ENCODE measurements at regions of chr3 and their contacts with region 1.

Region 1: GRCh38 chr3:142447852-142448823 is at the start of gene XRN1:
- DNase-seq: peak; percentile 89 to 97 (median 94)
- ATAC-seq: peak; percentile 94
- H3K4me3 ChIP-seq: peak within 1 kb of the TSS; percentile 85
- H3K4me3 Mint-ChIP-seq: peak within 1 kb of the TSS; percentile 95
- H3K27ac ChIP-seq: peak within 1 kb of the TSS; percentile 97 to 98
- H3K27ac Mint-ChIP-seq: peak within 1 kb of the TSS; percentile 99
- H3K4me1 ChIP-seq: peaks cover 16% of the 10 kb centered on the region
- H3K4me1 Mint-ChIP-seq: peaks cover 58% of the 10 kb centered on the region
- H3K27me3 ChIP-seq: no peaks in the 10 kb centered on the region
- H3K27me3 Mint-ChIP-seq: no peaks in the 10 kb centered on the region
- CTCF ChIP-seq: no peak
- total RNA-seq, gene XRN1: 85.7 to 97.6 TPM

Region 2: DNA sequence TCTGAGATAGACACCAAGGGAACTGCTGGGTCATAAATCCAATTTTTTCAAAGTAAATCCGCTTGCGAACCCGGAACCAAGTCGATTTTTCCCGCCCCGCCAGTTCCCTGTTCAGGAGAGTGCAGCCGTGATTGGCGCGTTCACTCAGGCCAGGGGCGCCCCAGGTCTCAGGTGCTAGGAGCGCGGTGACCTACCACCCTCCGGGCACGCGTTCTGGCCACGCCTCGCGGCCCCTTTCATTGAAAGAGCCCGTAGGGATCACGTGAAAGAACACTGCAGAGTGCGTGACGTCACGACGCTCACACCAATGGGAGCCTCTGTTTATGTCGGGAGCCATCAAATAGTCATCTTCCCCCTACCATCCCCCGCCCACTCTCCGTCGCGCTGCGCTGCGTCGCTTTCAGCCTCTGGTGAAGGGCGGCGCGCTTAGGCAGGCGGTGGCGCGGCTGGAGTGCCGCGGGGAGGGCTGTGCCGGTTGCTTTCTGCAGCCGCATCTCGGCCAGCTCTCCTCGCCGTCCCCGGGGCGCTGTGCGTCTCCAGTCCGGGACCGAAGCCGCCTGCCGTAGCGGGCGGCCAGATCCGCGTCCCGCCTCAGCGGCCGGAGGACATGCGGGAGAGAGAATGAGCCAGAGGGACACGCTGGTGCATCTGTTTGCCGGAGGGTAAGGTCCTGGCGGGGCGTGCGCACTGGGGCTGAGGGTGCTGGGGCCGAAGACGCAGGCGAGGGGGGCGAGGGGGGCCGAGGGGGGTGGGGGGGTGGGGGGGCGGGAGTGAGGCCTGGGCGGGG is 1506.5 kb before region 1 on chr3 and contains the start of gene SLC25A36:
- CTCF ChIA-PET with region 1: no interaction called
- POLR2A ChIA-PET with region 1: no interaction called
- intact Hi-C with region 1: loop called in 1 of 2 experiments (anchors 5 kb)
- DNase-seq: peak; percentile 87 to 99 (median 94)
- ATAC-seq: peak; percentile 96
- H3K4me3 ChIP-seq: peak within 1 kb of the TSS; percentile 71
- H3K4me3 Mint-ChIP-seq: peak within 1 kb of the TSS; percentile 94
- H3K27ac ChIP-seq: peak within 1 kb of the TSS; percentile 71 to 78
- H3K27ac Mint-ChIP-seq: peak within 1 kb of the TSS; percentile 100
- H3K4me1 ChIP-seq: peaks cover 9% of the 10 kb centered on the region
- H3K4me1 Mint-ChIP-seq: peaks cover 42% of the 10 kb centered on the region
- H3K27me3 ChIP-seq: no peaks in the 10 kb centered on the region
- H3K27me3 Mint-ChIP-seq: no peaks in the 10 kb centered on the region
- CTCF ChIP-seq: no peak
- total RNA-seq, gene SLC25A36: 166 to 171 TPM

Region 3: DNA sequence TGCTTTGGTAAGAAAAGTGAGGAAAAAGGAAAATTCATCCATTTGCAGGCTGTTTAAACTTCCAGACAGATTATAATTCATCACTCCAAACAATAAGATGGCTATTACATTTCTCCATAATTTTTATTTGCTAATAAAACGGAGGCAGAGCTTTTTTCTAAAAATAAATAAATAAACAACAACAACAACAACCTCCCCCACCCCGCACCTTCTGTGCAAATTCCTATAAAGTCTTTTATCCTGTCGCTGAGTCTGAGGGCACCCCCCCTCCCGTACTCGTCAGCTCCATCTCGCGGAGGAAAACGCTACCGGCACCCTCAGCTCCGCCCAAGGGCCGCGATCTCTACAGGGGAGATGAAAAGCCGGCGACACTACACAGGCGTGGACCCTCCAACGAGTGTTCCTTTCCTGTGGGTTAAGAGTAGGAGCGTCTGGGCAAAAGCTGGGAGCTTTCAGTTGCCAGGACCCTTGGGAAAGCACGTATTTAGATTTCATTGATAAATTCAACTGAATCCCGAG is 572.7 kb before region 1 on chr3:
- CTCF ChIA-PET with region 1: no interaction called
- POLR2A ChIA-PET with region 1: no interaction called
- intact Hi-C with region 1: loop called in 1 of 2 experiments (anchors 5 kb)
- DNase-seq: peak; percentile 71 to 91 (median 78)
- ATAC-seq: peak; percentile 65
- H3K4me3 ChIP-seq: peak overlapping the region; percentile 83
- H3K4me3 Mint-ChIP-seq: peak overlapping the region; percentile 92
- H3K27ac ChIP-seq: peak overlapping the region; percentile 90 to 98
- H3K27ac Mint-ChIP-seq: peak overlapping the region; percentile 93
- H3K4me1 ChIP-seq: peaks cover 11% of the 10 kb centered on the region
- H3K4me1 Mint-ChIP-seq: peaks cover 29% of the 10 kb centered on the region
- H3K27me3 ChIP-seq: no peaks in the 10 kb centered on the region
- H3K27me3 Mint-ChIP-seq: no peaks in the 10 kb centered on the region
- CTCF ChIP-seq: peak; percentile 90

Region 4: DNA sequence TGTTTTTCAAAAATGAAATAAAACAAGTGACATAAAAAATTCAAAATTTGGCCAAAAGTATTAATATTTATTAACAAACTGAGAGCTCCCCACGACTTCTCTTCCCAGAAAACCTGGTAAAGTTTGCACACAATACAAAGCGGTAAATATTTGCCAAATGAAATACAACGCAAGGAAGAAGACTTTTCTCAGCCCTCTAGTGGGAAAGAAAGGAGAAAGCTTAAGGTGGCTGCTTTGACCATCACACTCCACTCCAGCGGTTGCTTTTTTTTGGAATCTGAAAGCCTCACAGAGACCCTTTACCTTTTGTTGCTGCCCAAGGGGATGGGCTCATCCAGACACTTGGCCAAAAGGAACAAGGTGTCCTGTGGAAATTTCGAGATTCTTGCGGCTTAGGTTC is 221.7 kb before region 1 on chr3:
- CTCF ChIA-PET with region 1: no interaction called
- POLR2A ChIA-PET with region 1: no interaction called
- intact Hi-C with region 1: loop called in 1 of 2 experiments (anchors 5 kb)
- DNase-seq: peak in 1 of 14 experiments; percentile 10
- ATAC-seq: no peak
- H3K4me3 ChIP-seq: no peak overlapping the region
- H3K4me3 Mint-ChIP-seq: peak overlapping the region; percentile 95
- H3K27ac ChIP-seq: no peak overlapping the region
- H3K27ac Mint-ChIP-seq: no peak overlapping the region
- H3K4me1 ChIP-seq: peaks cover 10% of the 10 kb centered on the region
- H3K4me1 Mint-ChIP-seq: peaks cover 22% of the 10 kb centered on the region
- H3K27me3 ChIP-seq: no peaks in the 10 kb centered on the region
- H3K27me3 Mint-ChIP-seq: no peaks in the 10 kb centered on the region
- CTCF ChIP-seq: no peak

Region 5: GRCh38 chr3:142429582-142429981 is 18.6 kb before region 1 on chr3:
- CTCF ChIA-PET with region 1: no interaction called
- POLR2A ChIA-PET with region 1: no interaction called
- intact Hi-C with region 1: loop called in 1 of 2 experiments (anchors 2 kb)
- DNase-seq: no peak
- ATAC-seq: no peak
- H3K4me3 ChIP-seq: no peak overlapping the region
- H3K4me3 Mint-ChIP-seq: no peak overlapping the region
- H3K27ac ChIP-seq: no peak overlapping the region
- H3K27ac Mint-ChIP-seq: no peak overlapping the region
- H3K4me1 ChIP-seq: no peaks in the 10 kb centered on the region
- H3K4me1 Mint-ChIP-seq: peaks cover 22% of the 10 kb centered on the region
- H3K27me3 ChIP-seq: no peaks in the 10 kb centered on the region
- H3K27me3 Mint-ChIP-seq: no peaks in the 10 kb centered on the region
- CTCF ChIP-seq: no peak

Region 6: DNA sequence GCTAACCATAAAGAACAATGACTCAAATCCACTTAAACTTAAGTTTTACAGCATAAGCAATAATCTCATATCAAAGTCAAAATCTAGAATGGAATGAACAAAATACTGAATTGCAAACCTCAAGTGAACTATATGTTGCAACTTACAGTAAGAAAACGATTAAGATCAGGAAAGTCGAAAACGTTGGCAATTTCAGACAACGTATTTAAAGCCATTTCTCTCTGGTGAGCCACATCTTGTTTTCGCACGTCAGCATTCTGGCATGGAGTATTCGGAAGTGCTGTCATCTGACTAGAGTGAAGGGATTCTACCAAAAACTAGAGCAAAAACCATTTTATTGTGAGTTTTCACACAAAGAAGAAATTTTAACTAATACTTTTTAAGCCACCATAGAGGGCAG is 101.8 kb after region 1 on chr3:
- CTCF ChIA-PET with region 1: no interaction called
- POLR2A ChIA-PET with region 1: no interaction called
- intact Hi-C with region 1: no loop called
- DNase-seq: no peak
- ATAC-seq: no peak
- H3K4me3 ChIP-seq: no peak overlapping the region
- H3K4me3 Mint-ChIP-seq: no peak overlapping the region
- H3K27ac ChIP-seq: no peak overlapping the region
- H3K27ac Mint-ChIP-seq: no peak overlapping the region
- H3K4me1 ChIP-seq: no peaks in the 10 kb centered on the region
- H3K4me1 Mint-ChIP-seq: no peaks in the 10 kb centered on the region
- H3K27me3 ChIP-seq: no peaks in the 10 kb centered on the region
- H3K27me3 Mint-ChIP-seq: no peaks in the 10 kb centered on the region
- CTCF ChIP-seq: no peak

Region 7: DNA sequence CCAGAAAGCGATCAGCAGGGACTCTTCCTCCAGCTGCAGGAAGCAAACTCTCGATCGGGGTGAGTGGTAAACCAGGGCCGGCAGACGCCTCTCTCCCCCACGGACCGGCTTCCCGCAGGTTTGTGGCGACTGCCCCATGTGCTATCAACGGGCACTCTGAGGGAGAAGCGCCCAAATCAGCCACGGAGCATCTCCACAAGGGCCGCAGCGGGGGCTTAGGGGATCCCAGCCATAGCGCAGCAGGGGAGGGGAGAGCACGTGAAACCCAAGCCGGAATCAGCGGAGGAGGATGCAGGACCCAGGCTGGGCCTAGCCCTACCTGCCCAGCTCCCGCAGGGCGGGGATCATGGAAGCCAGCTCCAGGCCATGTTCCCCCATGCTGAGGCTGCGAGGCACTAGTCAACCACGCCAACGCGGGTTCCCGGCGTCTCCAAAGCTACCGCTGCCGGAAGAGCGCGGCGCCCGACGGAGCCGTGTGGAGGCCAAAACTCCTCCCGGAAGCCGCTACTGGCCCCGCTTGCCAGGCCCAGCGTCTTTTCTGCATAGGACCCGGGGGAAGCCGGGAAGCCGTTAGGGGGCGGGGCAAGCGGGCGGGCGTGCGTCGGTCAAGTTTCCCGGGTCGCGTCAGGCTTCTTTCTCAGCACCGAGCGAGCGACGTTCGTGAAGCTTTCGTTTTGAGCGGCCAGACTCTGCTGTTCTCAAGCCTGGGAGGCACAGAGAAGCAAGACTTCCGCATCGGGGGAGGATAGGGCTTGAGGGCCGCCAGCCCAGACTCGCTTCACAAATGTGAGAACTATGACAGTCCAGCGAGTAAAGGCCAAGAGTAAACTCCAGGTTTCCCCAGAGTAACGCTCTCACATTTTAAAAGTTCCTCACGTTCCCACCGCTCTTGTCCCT is 130.4 kb after region 1 on chr3 and contains the start of gene ATR:
- CTCF ChIA-PET with region 1: no interaction called
- POLR2A ChIA-PET with region 1: interaction called, 9 read pairs
- intact Hi-C with region 1: loop called (anchors 2 to 5 kb)
- DNase-seq: peak; percentile 91 to 98 (median 96)
- ATAC-seq: peak; percentile 93
- H3K4me3 ChIP-seq: peak within 1 kb of the TSS; percentile 95
- H3K4me3 Mint-ChIP-seq: peak within 1 kb of the TSS; percentile 99
- H3K27ac ChIP-seq: peak within 1 kb of the TSS; percentile 90 to 93
- H3K27ac Mint-ChIP-seq: peak within 1 kb of the TSS; percentile 97
- H3K4me1 ChIP-seq: peaks cover 15% of the 10 kb centered on the region
- H3K4me1 Mint-ChIP-seq: peaks cover 64% of the 10 kb centered on the region
- H3K27me3 ChIP-seq: no peaks in the 10 kb centered on the region
- H3K27me3 Mint-ChIP-seq: peaks cover 6% of the 10 kb centered on the region
- CTCF ChIP-seq: no peak
- total RNA-seq, gene ATR: 29.0 to 29.5 TPM

Region 8: DNA sequence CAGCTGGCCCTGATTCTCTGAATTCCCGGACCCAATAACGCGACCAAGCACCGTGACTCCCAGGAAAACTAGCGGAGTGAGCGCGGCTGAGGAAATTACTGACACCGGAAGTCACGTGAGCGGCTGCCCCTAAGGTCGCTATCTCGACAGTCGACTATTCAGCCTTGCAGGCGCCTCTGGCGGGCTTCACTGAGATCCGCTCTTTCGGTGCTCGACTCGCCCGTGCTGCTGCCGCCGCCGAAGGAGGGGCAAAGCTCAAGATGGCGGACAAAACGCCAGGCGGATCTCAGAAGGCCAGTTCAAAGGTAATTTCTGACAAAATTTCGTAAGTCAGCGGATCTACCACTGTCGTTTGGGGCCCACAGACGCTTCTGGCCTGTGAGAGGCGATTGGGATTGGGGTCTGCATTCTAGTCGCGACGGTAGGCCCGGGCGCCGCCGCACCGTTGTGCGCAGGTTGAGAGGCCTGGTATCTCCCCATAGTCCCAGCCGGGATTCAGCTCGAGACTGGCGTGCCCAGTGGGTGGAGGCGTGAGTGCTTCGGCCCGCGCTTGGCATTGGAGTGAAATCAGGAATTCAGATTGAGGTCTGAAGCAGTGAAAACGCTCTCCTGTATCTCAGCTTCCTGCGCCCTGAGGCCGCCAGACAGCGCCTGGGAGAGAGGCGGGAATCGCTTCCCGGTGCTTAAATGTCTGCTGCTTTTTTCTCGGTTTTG is 553.4 kb after region 1 on chr3 and contains the start of gene U2SURP:
- CTCF ChIA-PET with region 1: no interaction called
- POLR2A ChIA-PET with region 1: interaction called, 35 read pairs
- intact Hi-C with region 1: loop called (anchors 1 kb)
- DNase-seq: peak; percentile 83 to 96 (median 86)
- ATAC-seq: peak; percentile 93
- H3K4me3 ChIP-seq: peak within 1 kb of the TSS; percentile 89
- H3K4me3 Mint-ChIP-seq: peak within 1 kb of the TSS; percentile 97
- H3K27ac ChIP-seq: peak within 1 kb of the TSS; percentile 93 to 94
- H3K27ac Mint-ChIP-seq: peak within 1 kb of the TSS; percentile 97
- H3K4me1 ChIP-seq: peaks cover 23% of the 10 kb centered on the region
- H3K4me1 Mint-ChIP-seq: peaks cover 55% of the 10 kb centered on the region
- H3K27me3 ChIP-seq: peaks cover 0 to 4% of the 10 kb centered on the region in 2 experiments
- H3K27me3 Mint-ChIP-seq: peaks cover 14% of the 10 kb centered on the region
- CTCF ChIP-seq: no peak
- total RNA-seq, gene U2SURP: 164 to 179 TPM

Measured in CD4-positive, alpha-beta T cell (primary cell).